HCT116 (cell line): ENCODE measurements at regions of chr6 and their contacts with region 1.

Region 1: GRCh38 chr6:26122793-26123674 is 35.8 kb downstream of the HFE start:
- DNase-seq: peak; percentile 99
- ATAC-seq: peak; percentile 55
- H3K4me3 ChIP-seq: peak overlapping the region; percentile 70 to 91
- H3K27ac ChIP-seq: peak overlapping the region; percentile 99
- H3K4me1 ChIP-seq: peaks cover 47 to 69% of the 10 kb centered on the region in 2 experiments
- H3K27me3 ChIP-seq: no peaks in the 10 kb centered on the region
- CTCF ChIP-seq: no peak
- POLR2A ChIP-seq: peak; percentile 98
- RAD21 ChIP-seq: peak; percentile 30

Region 2: GRCh38 chr6:25617997-25618396 is 505.0 kb before region 1 on chr6:
- CTCF ChIA-PET with region 1: no interaction called
- POLR2A ChIA-PET with region 1: no interaction called
- RAD21 ChIA-PET with region 1: no interaction called
- intact Hi-C with region 1: no loop called
- DNase-seq: no peak
- ATAC-seq: no peak
- H3K4me3 ChIP-seq: no peak overlapping the region
- H3K27ac ChIP-seq: no peak overlapping the region
- H3K4me1 ChIP-seq: no peaks in the 10 kb centered on the region
- H3K27me3 ChIP-seq: no peaks in the 10 kb centered on the region
- CTCF ChIP-seq: no peak
- POLR2A ChIP-seq: no peak
- RAD21 ChIP-seq: no peak

Region 3: DNA sequence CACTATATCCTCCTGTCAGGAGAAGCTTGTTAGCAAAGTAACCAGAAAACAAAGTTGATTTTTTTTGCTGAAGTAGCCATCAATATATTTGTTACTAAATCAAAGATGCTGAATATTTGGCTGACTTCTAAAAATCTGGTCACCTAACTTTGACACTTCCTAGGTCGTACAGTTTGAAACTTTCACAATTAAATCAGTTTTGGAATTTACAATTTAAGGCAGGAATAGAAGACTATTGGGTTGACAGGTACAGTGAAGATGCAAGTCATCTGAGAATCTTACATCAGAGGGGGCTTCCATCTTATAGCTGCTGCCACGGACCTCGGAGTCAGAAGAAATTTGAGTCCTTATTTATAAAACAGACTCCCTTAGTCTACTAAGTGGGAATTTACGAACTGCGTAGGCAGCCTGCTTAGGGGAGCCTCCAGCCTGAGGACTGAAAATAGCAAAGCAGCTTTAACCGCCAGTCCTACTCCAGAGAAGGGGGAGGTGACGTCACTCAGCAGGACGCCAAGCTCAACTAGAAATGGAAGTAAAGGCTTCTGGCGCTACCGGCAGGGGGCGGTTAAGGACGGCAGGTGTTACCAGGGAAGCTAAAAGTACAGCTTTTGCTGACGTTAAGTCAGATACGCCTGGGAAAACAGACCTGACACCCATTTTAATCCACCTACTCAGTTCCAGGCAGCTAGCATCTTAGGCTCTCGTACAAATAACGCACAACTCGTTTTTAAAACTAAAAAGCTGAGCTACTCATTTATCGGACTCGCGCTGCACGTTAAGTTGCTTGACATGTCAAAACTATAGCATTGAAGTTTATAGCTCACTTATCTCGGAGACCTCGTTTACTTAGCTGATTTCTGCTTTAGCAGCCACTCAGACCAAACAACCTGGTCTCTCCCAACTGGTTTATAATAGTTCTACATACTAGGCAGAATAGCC is 96.9 kb before region 1 on chr6:
- CTCF ChIA-PET with region 1: no interaction called
- POLR2A ChIA-PET with region 1: interaction called, 89 read pairs
- RAD21 ChIA-PET with region 1: no interaction called
- intact Hi-C with region 1: loop called (anchors 2 kb)
- DNase-seq: peak; percentile 92
- ATAC-seq: peak; percentile 38
- H3K4me3 ChIP-seq: peak overlapping the region; percentile 52 to 66
- H3K27ac ChIP-seq: peak overlapping the region; percentile 98
- H3K4me1 ChIP-seq: peaks cover 51 to 84% of the 10 kb centered on the region in 2 experiments
- H3K27me3 ChIP-seq: no peaks in the 10 kb centered on the region
- CTCF ChIP-seq: peak in 2 of 3 experiments; percentile 84 to 89; a peak in 4 of 6 replicates
- POLR2A ChIP-seq: no peak
- RAD21 ChIP-seq: no peak

Region 4: GRCh38 chr6:26103770-26104456 is 19.1 kb before region 1 on chr6:
- CTCF ChIA-PET with region 1: no interaction called
- POLR2A ChIA-PET with region 1: interaction called, 104 read pairs
- RAD21 ChIA-PET with region 1: no interaction called
- intact Hi-C with region 1: loop called (anchors 1 kb)
- DNase-seq: peak; percentile 95
- ATAC-seq: peak; percentile 74
- H3K4me3 ChIP-seq: peak overlapping the region; percentile 48 to 59
- H3K27ac ChIP-seq: peak overlapping the region; percentile 94
- H3K4me1 ChIP-seq: peaks cover 17 to 39% of the 10 kb centered on the region in 2 experiments
- H3K27me3 ChIP-seq: no peaks in the 10 kb centered on the region
- CTCF ChIP-seq: peak in 2 of 3 experiments; percentile 35 to 40; a peak in 2 of 6 replicates
- POLR2A ChIP-seq: peak; percentile 99
- RAD21 ChIP-seq: peak; percentile 42

Region 5: DNA sequence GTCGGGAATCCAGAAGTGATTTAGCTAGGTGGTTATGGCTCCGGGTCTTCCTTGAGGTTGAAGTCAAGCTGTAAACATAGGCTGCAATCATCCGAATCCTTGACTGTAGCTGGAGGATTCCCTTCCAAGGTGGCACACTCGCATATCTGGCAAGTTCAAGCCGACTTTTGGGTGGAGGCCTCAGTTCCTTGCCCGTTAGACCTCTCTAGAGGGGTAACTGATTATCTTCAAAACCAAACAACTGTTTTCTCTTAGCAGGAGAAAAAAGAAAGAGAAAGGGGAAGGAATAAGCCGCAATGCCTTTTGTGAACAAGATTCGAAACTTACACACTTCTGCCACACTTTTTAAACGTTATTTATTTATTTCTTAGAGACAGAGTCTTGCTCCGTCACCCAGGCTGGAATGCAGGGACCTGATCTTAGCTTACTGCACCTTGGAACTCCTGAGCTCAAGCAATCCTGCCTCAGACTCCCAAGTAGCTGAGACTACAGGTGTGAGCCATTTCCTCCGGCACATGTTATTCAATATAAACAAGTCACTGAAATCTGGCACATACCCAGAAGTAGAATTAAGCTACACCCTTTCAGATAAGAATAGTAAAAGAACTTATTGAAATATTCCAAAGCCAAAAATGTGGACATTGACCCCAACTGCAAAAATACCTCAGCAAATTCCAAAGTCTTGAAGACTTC is 40.5 kb after region 1 on chr6:
- CTCF ChIA-PET with region 1: interaction called, 7 read pairs
- POLR2A ChIA-PET with region 1: interaction called, 571 read pairs
- RAD21 ChIA-PET with region 1: no interaction called
- intact Hi-C with region 1: no loop called
- DNase-seq: no peak
- ATAC-seq: no peak
- H3K4me3 ChIP-seq: no peak overlapping the region
- H3K27ac ChIP-seq: no peak overlapping the region
- H3K4me1 ChIP-seq: peaks cover 19 to 36% of the 10 kb centered on the region in 2 experiments
- H3K27me3 ChIP-seq: no peaks in the 10 kb centered on the region
- CTCF ChIP-seq: no peak
- POLR2A ChIP-seq: no peak
- RAD21 ChIP-seq: no peak

Region 6: GRCh38 chr6:26196846-26197648 is 74.0 kb after region 1 on chr6:
- CTCF ChIA-PET with region 1: interaction called, 3 read pairs
- POLR2A ChIA-PET with region 1: interaction called, 152 read pairs
- RAD21 ChIA-PET with region 1: no interaction called
- intact Hi-C with region 1: loop called (anchors 1 kb)
- DNase-seq: peak; percentile 75
- ATAC-seq: peak; percentile 41
- H3K4me3 ChIP-seq: peak overlapping the region; percentile 70 to 76
- H3K27ac ChIP-seq: peak overlapping the region; percentile 98
- H3K4me1 ChIP-seq: peaks cover 13 to 37% of the 10 kb centered on the region in 2 experiments
- H3K27me3 ChIP-seq: no peaks in the 10 kb centered on the region
- CTCF ChIP-seq: no peak
- POLR2A ChIP-seq: peak; percentile 92
- RAD21 ChIP-seq: no peak

Region 7: GRCh38 chr6:26268659-26269402 is 145.8 kb after region 1 on chr6:
- CTCF ChIA-PET with region 1: no interaction called
- POLR2A ChIA-PET with region 1: no interaction called
- RAD21 ChIA-PET with region 1: no interaction called
- intact Hi-C with region 1: no loop called
- DNase-seq: no peak
- ATAC-seq: no peak
- H3K4me3 ChIP-seq: no peak overlapping the region
- H3K27ac ChIP-seq: no peak overlapping the region
- H3K4me1 ChIP-seq: peaks cover 0 to 9% of the 10 kb centered on the region in 2 experiments; a peak in 2 of 4 replicates
- H3K27me3 ChIP-seq: no peaks in the 10 kb centered on the region
- CTCF ChIP-seq: no peak
- POLR2A ChIP-seq: no peak
- RAD21 ChIP-seq: no peak

Region 8: GRCh38 chr6:27146706-27147505 is 1023.9 kb after region 1 on chr6:
- CTCF ChIA-PET with region 1: no interaction called
- POLR2A ChIA-PET with region 1: interaction called, 19 read pairs
- RAD21 ChIA-PET with region 1: no interaction called
- intact Hi-C with region 1: no loop called
- DNase-seq: peak; percentile 99
- ATAC-seq: peak; percentile 71
- H3K4me3 ChIP-seq: peak overlapping the region; percentile 69 to 70
- H3K27ac ChIP-seq: peak overlapping the region; percentile 97
- H3K4me1 ChIP-seq: peaks cover 26 to 55% of the 10 kb centered on the region in 2 experiments
- H3K27me3 ChIP-seq: no peaks in the 10 kb centered on the region
- CTCF ChIP-seq: no peak
- POLR2A ChIP-seq: peak; percentile 93
- RAD21 ChIP-seq: no peak